ENCODE measurements at regions of chr11 and their contacts with region 1.

Region 1: GRCh38 chr11:119381181-119381988 is at the start of gene USP2:
- DNase-seq: peak; percentile 63
- H3K4me3 ChIP-seq: peak within 1 kb of the TSS; percentile 64
- CTCF ChIP-seq: peak; percentile 96

Region 2: GRCh38 chr11:119363851-119364590 is 17.4 kb before region 1 on chr11:
- CTCF ChIA-PET with region 1: interaction called, 145 read pairs
- POLR2A ChIA-PET with region 1: no interaction called
- DNase-seq: no peak
- H3K4me3 ChIP-seq: peak overlapping the region; percentile 50
- CTCF ChIP-seq: no peak

Region 3: GRCh38 chr11:119397740-119398139 is 16.4 kb after region 1 on chr11:
- CTCF ChIA-PET with region 1: interaction called, 30 read pairs
- POLR2A ChIA-PET with region 1: no interaction called
- DNase-seq: no peak
- H3K4me3 ChIP-seq: no peak overlapping the region
- CTCF ChIP-seq: no peak

Region 4: DNA sequence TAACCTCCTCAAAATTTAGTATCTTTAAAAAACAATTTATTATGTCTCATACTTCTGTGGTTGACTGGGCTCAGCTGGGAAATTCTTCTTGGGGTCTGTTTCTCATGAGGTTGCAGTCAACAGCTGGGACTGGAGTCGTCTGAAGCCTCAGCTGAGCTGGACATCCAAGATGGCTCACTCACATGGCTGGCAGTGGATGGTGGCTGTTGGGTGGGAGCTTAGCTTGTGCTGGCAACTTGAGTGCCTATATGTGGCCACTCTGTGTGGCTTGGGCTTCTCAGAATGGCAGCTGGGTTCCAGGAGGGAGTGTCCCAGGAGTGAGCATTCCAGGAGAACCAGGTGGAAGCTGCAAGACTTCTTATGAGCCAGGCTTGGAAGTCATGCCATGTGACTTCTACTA is 28.3 kb after region 1 on chr11:
- CTCF ChIA-PET with region 1: interaction called, 13 read pairs
- POLR2A ChIA-PET with region 1: no interaction called
- DNase-seq: no peak
- H3K4me3 ChIP-seq: no peak overlapping the region
- CTCF ChIP-seq: no peak

Region 5: DNA sequence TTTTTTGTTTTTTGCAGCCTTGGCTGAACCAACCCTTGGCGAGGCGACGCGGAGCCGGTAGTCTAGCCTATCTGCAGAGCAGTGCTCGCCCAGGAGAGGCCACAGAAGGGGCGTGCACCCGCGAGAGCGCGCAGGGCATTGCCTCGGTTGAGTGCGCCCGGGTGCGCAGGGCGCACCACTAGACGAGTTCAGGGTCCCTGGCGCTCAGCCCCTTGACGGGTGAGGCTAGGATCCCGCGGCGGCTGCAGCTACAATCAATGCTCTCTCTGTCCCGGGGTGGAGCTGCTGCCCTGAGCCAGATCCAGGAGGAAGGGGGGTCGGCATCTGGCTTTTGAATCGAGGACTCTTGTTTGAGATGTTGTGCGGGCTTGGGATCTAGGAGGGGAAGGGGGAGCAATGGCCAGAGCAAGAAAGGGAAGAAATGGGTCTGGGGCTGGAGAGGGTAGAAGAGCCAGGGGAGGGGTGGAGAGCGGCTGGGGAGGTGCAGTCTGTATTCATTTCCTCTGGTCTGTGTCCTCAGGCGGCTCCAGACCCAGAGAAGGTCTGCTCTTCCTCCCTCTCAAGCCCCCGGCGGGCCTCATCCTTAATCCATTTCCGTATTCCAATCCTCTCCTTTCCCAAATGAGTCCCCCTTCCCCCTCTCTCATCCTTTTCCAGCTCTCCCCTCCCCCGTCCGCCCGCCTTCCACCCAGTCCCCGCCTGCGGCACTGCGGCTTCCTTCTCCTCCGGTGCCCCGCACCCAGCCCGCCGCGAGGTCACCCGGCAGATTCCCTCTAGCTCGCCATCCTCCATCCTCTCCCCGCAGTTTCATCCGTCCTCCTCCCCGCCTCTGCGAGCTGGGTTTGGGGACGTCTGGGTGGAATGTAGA is 40.8 kb after region 1 on chr11:
- CTCF ChIA-PET with region 1: interaction called, 12 read pairs
- POLR2A ChIA-PET with region 1: interaction called, 3 read pairs
- DNase-seq: no peak
- H3K4me3 ChIP-seq: peak overlapping the region; percentile 91
- CTCF ChIP-seq: no peak

Region 6: GRCh38 chr11:119481021-119481666 is 99.8 kb after region 1 on chr11:
- CTCF ChIA-PET with region 1: interaction called, 425 read pairs
- POLR2A ChIA-PET with region 1: no interaction called
- DNase-seq: peak; percentile 90
- H3K4me3 ChIP-seq: no peak overlapping the region
- CTCF ChIP-seq: peak; percentile 95

Measured in AG04449 (cell line).